GM12878 (cell line): ENCODE measurements at regions of chr18 and their contacts with region 1.

Region 1: DNA sequence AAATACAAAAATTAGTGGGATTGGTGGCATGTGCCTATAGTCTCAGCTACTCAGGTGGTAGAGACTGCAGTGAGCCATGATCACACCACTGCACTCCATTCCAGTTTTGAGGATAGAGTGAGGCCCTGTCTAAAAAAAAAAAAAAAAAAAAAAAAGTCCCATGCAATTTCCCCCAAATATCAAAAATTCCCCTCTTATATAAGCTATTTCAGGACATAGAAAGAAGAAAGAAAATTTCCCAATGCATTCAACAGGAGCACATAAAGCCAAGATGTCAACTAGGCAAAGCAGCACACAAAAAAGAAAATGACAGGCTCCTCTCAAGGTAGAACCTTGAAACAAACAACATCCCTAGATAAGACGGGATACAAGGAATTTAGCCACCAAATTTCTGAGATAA is 213.3 kb downstream of the TCF4 start:
- DNase-seq: no peak
- ATAC-seq: no peak
- H3K4me3 ChIP-seq: no peak overlapping the region
- H3K27ac ChIP-seq: no peak overlapping the region
- H3K4me1 ChIP-seq: peaks cover 5% of the 10 kb centered on the region
- H3K27me3 ChIP-seq: no peaks in the 10 kb centered on the region
- CTCF ChIP-seq: no peak
- EP300 ChIP-seq: no peak
- POLR2A ChIP-seq: no peak
- RAD21 ChIP-seq: no peak

Region 2: GRCh38 chr18:55220523-55220922 is 154.2 kb before region 1 on chr18:
- CTCF ChIA-PET with region 1: no interaction called
- POLR2A ChIA-PET with region 1: interaction called, 10 read pairs
- RAD21 ChIA-PET with region 1: no interaction called
- SMC1A ChIA-PET with region 1: no interaction called
- in situ Hi-C with region 1: no loop called
- intact Hi-C with region 1: no loop called
- DNase-seq: peak; percentile 33
- ATAC-seq: peak; percentile 77
- H3K4me3 ChIP-seq: no peak overlapping the region
- H3K27ac ChIP-seq: no peak overlapping the region; the same call in 1 of the 2 replicates
- H3K4me1 ChIP-seq: peaks cover 14% of the 10 kb centered on the region
- H3K27me3 ChIP-seq: no peaks in the 10 kb centered on the region
- CTCF ChIP-seq: no peak
- EP300 ChIP-seq: no peak
- POLR2A ChIP-seq: no peak
- RAD21 ChIP-seq: no peak

Region 3: DNA sequence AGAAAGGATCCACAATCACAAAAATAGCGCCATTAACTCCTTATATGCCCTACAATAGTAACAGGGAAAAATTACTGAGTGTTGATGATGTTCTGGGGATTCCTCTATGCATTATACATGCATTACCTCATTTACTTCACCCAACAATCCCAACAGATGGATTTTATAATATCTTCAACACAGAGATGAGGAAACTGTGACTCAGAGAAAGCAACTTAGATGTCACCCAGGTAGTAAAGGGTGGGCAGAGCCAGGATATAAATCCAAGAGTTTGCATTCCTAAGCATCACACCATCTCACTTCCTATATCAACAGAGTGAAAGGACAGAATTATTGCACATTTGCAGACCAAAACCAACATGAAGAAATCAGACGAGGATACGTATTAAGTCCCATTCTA is 69.0 kb after region 1 on chr18:
- CTCF ChIA-PET with region 1: no interaction called
- POLR2A ChIA-PET with region 1: no interaction called
- RAD21 ChIA-PET with region 1: no interaction called
- SMC1A ChIA-PET with region 1: no interaction called
- in situ Hi-C with region 1: no loop called
- intact Hi-C with region 1: no loop called
- DNase-seq: no peak
- ATAC-seq: no peak
- H3K4me3 ChIP-seq: no peak overlapping the region
- H3K27ac ChIP-seq: no peak overlapping the region
- H3K4me1 ChIP-seq: no peaks in the 10 kb centered on the region
- H3K27me3 ChIP-seq: no peaks in the 10 kb centered on the region; a peak in 1 of 4 replicates
- CTCF ChIP-seq: no peak
- EP300 ChIP-seq: no peak
- POLR2A ChIP-seq: no peak
- RAD21 ChIP-seq: no peak